Activated B cell treated with CpG ODN at 0.5 μM for 24 hours (primary cell): ENCODE measurements at regions of chr5 and their contacts with region 1.

Region 1: DNA sequence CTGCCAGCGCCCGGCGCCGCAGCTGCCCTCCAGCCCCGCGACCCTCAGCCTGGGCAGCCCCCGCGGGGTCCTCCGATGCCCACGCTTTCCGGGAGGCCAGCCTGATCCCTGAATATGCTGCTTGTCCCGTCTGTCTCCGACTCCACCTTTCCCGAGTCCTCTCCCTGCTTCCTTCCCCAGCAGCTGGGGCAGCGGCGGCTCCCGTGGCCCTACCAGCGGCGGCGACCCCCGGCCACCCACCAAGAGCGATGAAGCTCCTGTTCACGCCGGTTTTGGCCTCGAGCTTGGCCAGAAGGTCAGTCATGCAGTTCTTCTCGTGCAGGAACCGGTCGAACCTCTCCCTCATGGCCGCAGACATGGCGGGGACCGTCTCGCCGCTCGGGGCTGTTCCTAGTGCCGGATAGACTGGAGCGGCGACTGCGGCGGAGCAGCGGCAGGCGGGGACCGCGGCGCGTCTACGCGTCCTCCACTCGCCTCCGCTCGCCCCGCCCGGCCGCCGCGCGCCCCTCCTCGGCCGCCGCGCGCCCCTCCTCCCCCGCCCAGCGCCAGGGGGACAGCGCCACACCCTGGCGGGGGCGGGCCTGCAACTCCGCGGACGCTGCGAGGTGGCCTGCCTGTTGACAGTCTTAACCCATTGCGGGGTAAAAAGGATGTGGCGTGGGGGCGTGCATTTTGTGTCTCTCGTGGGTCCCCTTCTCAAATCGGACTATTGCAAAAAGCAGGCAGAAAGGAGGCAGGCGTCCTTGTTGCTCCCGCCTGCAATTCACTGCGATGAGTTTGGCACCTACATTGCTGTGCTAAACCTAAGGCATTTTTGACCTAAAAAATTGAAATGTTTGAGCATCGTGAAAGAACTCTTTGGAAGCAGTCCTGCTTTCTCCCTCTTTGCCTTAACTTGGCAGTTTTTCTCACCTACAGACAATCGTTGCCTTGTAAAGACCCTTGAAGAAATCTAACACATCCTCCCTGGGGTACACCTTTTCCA is at the start of gene REEP5:
- DNase-seq: peak; percentile 85
- ATAC-seq: peak; percentile 77
- H3K4me3 Mint-ChIP-seq: peak within 1 kb of the TSS; percentile 96
- H3K27ac Mint-ChIP-seq: peak within 1 kb of the TSS; percentile 94
- H3K4me1 Mint-ChIP-seq: peaks cover 80% of the 10 kb centered on the region
- H3K27me3 Mint-ChIP-seq: no peaks in the 10 kb centered on the region
- CTCF ChIP-seq: no peak
- total RNA-seq, gene REEP5: 44.5 and 46.8 TPM in 2 replicates

Region 2: GRCh38 chr5:111530298-111530740 is 1391.8 kb before region 1 on chr5:
- CTCF ChIA-PET with region 1: no interaction called
- POLR2A ChIA-PET with region 1: no interaction called
- intact Hi-C with region 1: loop called (anchors 1 kb)
- DNase-seq: peak; percentile 61
- ATAC-seq: peak; percentile 100
- H3K4me3 Mint-ChIP-seq: peak overlapping the region; percentile 49
- H3K27ac Mint-ChIP-seq: peak overlapping the region; percentile 75
- H3K4me1 Mint-ChIP-seq: peaks cover 23% of the 10 kb centered on the region
- H3K27me3 Mint-ChIP-seq: no peaks in the 10 kb centered on the region
- CTCF ChIP-seq: no peak

Region 3: DNA sequence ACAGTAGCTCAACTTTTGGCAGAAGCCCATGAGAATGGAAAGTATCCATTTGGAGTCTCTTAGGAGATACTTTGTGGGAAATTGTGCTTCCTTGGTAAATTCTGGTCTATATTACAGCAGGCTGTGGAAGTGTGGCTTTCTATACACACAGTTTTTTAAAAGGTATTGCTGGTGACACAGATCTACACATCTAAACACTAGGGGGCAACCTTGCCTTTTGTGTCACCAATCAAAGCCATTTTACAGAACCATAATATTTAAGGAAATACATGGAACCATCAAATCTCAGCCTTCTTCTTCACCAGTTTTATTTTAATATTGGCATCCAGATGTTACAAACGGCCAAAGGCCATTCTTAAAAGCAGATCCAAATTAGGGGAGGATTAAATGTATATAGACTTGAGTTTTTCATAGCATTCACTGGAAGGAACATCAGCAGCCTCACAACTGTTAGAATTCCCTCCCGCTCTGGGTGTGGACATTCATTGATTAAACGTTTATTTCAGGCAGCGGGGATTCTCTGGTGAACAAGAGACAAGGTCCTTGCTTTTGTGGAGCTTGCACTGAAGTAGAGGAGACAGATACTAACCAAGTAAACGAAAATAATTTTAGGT is 370.6 kb before region 1 on chr5:
- CTCF ChIA-PET with region 1: no interaction called
- POLR2A ChIA-PET with region 1: no interaction called
- intact Hi-C with region 1: loop called (anchors 1 kb)
- DNase-seq: no peak
- ATAC-seq: peak; percentile 77
- H3K4me3 Mint-ChIP-seq: no peak overlapping the region
- H3K27ac Mint-ChIP-seq: no peak overlapping the region
- H3K4me1 Mint-ChIP-seq: peaks cover 33% of the 10 kb centered on the region
- H3K27me3 Mint-ChIP-seq: no peaks in the 10 kb centered on the region
- CTCF ChIP-seq: peak; percentile 16

Region 4: DNA sequence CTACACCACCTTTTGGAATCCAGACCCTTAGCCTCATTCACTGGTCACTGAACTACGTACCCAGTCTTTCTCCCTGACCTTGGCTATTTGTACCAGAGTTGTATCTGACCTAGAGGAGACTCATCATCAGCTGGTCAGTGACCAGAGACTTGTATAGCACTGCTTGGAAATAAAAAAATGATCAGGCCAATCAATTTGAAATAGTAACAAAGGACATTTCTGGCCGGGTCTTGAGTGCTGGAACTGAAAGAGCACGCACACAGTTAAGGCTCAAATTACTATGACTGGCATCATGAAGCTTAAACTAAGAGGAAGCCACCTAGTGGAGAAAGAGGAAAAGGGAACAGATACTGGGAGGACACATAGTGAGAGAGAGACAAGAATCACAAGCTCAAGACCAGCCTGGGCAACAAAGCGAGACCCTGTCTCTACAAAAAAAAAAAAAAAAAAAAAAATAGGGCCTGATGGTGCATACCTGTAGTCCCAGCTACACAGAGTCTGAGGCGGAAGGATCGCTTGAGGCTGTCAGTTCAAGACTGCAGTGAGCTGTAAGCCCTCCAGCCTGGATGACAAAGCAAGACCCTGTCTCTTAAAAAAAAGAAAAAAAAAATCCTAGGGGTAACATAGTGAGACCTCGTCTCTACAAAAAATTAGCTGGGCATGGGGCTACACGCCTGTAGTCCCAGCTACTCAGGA is 73.9 kb before region 1 on chr5:
- CTCF ChIA-PET with region 1: interaction called, 3 read pairs
- POLR2A ChIA-PET with region 1: interaction called, 5 read pairs
- intact Hi-C with region 1: loop called (anchors 5 kb)
- DNase-seq: no peak
- ATAC-seq: peak; percentile 100
- H3K4me3 Mint-ChIP-seq: peak overlapping the region; percentile 1
- H3K27ac Mint-ChIP-seq: peak overlapping the region; percentile 64
- H3K4me1 Mint-ChIP-seq: peaks cover 8% of the 10 kb centered on the region
- H3K27me3 Mint-ChIP-seq: no peaks in the 10 kb centered on the region
- CTCF ChIP-seq: no peak

Region 5: GRCh38 chr5:112907166-112907631 is 14.9 kb before region 1 on chr5:
- CTCF ChIA-PET with region 1: interaction called, 3 read pairs
- POLR2A ChIA-PET with region 1: interaction called, 8 read pairs
- intact Hi-C with region 1: loop called (anchors 2 kb)
- DNase-seq: no peak
- ATAC-seq: no peak
- H3K4me3 Mint-ChIP-seq: no peak overlapping the region
- H3K27ac Mint-ChIP-seq: peak overlapping the region; percentile 81
- H3K4me1 Mint-ChIP-seq: peaks cover 32% of the 10 kb centered on the region
- H3K27me3 Mint-ChIP-seq: no peaks in the 10 kb centered on the region
- CTCF ChIP-seq: no peak

Region 6: DNA sequence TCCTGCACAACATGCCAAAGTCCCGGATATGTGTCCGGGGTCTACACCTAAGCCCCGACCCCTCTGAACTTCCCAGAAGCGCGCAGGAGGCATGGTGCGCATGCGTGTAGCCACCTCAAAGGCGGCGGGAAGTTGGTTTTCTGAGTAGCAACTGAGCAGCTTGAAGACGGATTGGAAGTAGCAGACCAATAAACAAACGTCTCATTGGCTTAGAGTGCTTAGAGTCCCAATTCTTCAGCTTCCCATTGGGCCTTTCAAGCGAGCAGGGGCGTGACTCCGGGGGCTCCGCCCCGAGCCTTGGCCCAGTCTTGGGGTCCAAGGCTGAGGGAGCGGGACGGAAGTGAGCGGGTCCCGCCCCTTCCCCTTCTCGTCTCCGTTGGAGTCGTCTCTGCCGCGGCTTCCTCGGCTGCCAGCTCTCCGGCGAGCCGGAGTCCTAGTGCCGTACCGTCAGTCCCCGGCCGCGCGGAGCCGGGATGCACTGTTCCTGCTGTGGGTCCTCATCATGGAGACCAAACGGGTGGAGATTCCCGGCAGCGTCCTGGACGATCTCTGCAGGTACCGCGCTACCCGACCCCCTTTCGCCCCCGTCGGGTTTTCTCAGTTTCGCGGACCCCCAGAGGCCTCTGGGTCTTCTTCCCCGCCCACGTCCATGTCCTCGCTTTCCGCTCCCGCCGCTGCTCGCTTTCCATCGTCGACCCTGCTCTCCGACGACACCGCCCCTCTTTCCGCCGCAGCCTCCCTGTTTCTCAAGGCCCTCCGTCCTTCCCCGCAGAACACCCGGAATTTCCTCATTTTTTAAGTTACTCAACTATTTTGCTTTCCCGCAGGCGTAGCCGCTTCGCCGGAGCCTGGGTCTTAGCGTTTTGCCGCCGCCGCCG is 54.5 kb after region 1 on chr5 and contains the start of gene DCP2:
- CTCF ChIA-PET with region 1: interaction called, 6 read pairs
- POLR2A ChIA-PET with region 1: interaction called, 41 read pairs
- intact Hi-C with region 1: loop called (anchors 1 kb)
- DNase-seq: peak; percentile 93
- ATAC-seq: peak; percentile 98
- H3K4me3 Mint-ChIP-seq: peak within 1 kb of the TSS; percentile 100
- H3K27ac Mint-ChIP-seq: peak within 1 kb of the TSS; percentile 96
- H3K4me1 Mint-ChIP-seq: peaks cover 53% of the 10 kb centered on the region
- H3K27me3 Mint-ChIP-seq: no peaks in the 10 kb centered on the region
- CTCF ChIP-seq: no peak
- total RNA-seq, gene DCP2: 53.5 and 56.0 TPM in 2 replicates